ENCODE measurements at regions of chr3 and their contacts with region 1.

Region 1: GRCh38 chr3:51498876-51499738 is 708 bp downstream of the DCAF1 start:
- DNase-seq: peak; percentile 70
- ATAC-seq: peak; percentile 84
- H3K4me3 ChIP-seq: peak overlapping the region; percentile 71
- H3K27ac ChIP-seq: peak overlapping the region; percentile 80
- H3K4me1 ChIP-seq: peaks cover 5% of the 10 kb centered on the region
- H3K27me3 ChIP-seq: no peaks in the 10 kb centered on the region
- CTCF ChIP-seq: no peak
- EP300 ChIP-seq: no peak
- POLR2A ChIP-seq: 0 out of 2 replicates have a peak, but pooled peaks have one; percentile 0
- RAD21 ChIP-seq: no peak

Region 2: GRCh38 chr3:50568947-50569749 is 930.0 kb before region 1 on chr3 and contains the start of gene HEMK1:
- CTCF ChIA-PET with region 1: no interaction called
- POLR2A ChIA-PET with region 1: interaction called, 10 read pairs
- RAD21 ChIA-PET with region 1: interaction called, 4 read pairs
- SMC1A ChIA-PET with region 1: no interaction called
- in situ Hi-C with region 1: no loop called
- intact Hi-C with region 1: no loop called
- DNase-seq: peak; percentile 76
- ATAC-seq: peak; percentile 84
- H3K4me3 ChIP-seq: peak within 1 kb of the TSS; percentile 81
- H3K27ac ChIP-seq: peak within 1 kb of the TSS; percentile 91
- H3K4me1 ChIP-seq: peaks cover 13% of the 10 kb centered on the region
- H3K27me3 ChIP-seq: no peaks in the 10 kb centered on the region
- CTCF ChIP-seq: no peak
- EP300 ChIP-seq: 0 out of 4 replicates have a peak, but pooled peaks of 1 of the 2 experiments have one; percentile 15
- POLR2A ChIP-seq: peak; percentile 85
- RAD21 ChIP-seq: no peak
- polyA plus RNA-seq, gene HEMK1: 2.8 to 10.5 TPM

Region 3: GRCh38 chr3:51216291-51216690 is 282.8 kb before region 1 on chr3:
- CTCF ChIA-PET with region 1: no interaction called
- POLR2A ChIA-PET with region 1: no interaction called
- RAD21 ChIA-PET with region 1: no interaction called
- SMC1A ChIA-PET with region 1: no interaction called
- in situ Hi-C with region 1: no loop called
- intact Hi-C with region 1: no loop called
- DNase-seq: no peak
- ATAC-seq: no peak
- H3K4me3 ChIP-seq: no peak overlapping the region
- H3K27ac ChIP-seq: no peak overlapping the region
- H3K4me1 ChIP-seq: no peaks in the 10 kb centered on the region
- H3K27me3 ChIP-seq: no peaks in the 10 kb centered on the region; a peak in 1 of 4 replicates
- CTCF ChIP-seq: no peak
- EP300 ChIP-seq: no peak
- POLR2A ChIP-seq: no peak
- RAD21 ChIP-seq: no peak

Region 4: DNA sequence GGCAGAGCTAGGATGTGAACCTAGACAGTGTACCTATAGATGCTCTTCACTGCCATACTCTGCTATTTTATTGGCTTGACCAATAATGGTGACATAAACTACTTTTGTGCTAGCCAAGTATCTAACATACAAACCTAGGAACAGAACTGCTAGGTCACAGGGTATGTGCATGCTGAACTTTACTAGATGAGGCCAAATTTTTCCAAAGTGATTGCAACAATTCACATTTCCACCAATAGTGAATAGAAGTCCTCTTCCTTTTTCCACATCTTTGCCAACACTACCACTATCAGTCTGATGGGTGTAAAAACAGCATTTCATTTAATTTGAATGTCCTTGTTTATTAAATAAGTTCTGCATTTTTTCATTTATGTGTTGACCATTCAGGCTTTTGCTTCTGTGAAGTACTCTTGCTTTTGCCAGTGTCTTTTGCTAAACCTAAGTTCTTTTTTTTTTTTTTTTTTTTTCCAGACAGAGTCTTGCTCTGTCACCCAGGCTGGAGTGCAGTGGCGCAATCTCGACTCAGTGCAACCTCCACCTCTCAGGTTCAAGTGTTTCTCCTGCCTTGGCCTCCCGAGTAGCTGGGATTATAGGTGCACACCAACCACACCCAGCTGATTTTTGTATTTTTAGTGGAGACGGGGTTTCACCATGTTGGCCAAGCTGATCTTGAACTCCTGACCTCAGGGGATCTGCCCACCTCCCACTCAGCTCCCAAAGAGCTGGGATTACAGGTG is 53.4 kb before region 1 on chr3:
- CTCF ChIA-PET with region 1: no interaction called
- POLR2A ChIA-PET with region 1: interaction called, 14 read pairs
- RAD21 ChIA-PET with region 1: interaction called, 4 read pairs
- SMC1A ChIA-PET with region 1: no interaction called
- in situ Hi-C with region 1: no loop called
- intact Hi-C with region 1: no loop called
- DNase-seq: no peak
- ATAC-seq: no peak
- H3K4me3 ChIP-seq: no peak overlapping the region
- H3K27ac ChIP-seq: no peak overlapping the region
- H3K4me1 ChIP-seq: peaks cover 3% of the 10 kb centered on the region; the same call in 1 of the 2 replicates
- H3K27me3 ChIP-seq: no peaks in the 10 kb centered on the region
- CTCF ChIP-seq: no peak
- EP300 ChIP-seq: no peak
- POLR2A ChIP-seq: no peak
- RAD21 ChIP-seq: no peak

Region 5: GRCh38 chr3:51478630-51479029 is 20.5 kb before region 1 on chr3:
- CTCF ChIA-PET with region 1: no interaction called
- POLR2A ChIA-PET with region 1: no interaction called
- RAD21 ChIA-PET with region 1: no interaction called
- SMC1A ChIA-PET with region 1: no interaction called
- in situ Hi-C with region 1: no loop called
- intact Hi-C with region 1: no loop called
- DNase-seq: no peak
- ATAC-seq: no peak
- H3K4me3 ChIP-seq: no peak overlapping the region
- H3K27ac ChIP-seq: no peak overlapping the region
- H3K4me1 ChIP-seq: no peaks in the 10 kb centered on the region
- H3K27me3 ChIP-seq: no peaks in the 10 kb centered on the region
- CTCF ChIP-seq: no peak
- EP300 ChIP-seq: no peak
- POLR2A ChIP-seq: no peak
- RAD21 ChIP-seq: no peak

Region 6: GRCh38 chr3:51530490-51530889 is 31.4 kb after region 1 on chr3:
- CTCF ChIA-PET with region 1: interaction called, 13 read pairs
- POLR2A ChIA-PET with region 1: interaction called, 10 read pairs
- RAD21 ChIA-PET with region 1: interaction called, 69 read pairs
- SMC1A ChIA-PET with region 1: interaction called, 4 read pairs
- in situ Hi-C with region 1: no loop called
- intact Hi-C with region 1: loop called (anchors 2 kb)
- DNase-seq: no peak
- ATAC-seq: no peak
- H3K4me3 ChIP-seq: no peak overlapping the region
- H3K27ac ChIP-seq: no peak overlapping the region
- H3K4me1 ChIP-seq: no peaks in the 10 kb centered on the region
- H3K27me3 ChIP-seq: no peaks in the 10 kb centered on the region
- CTCF ChIP-seq: no peak
- EP300 ChIP-seq: no peak
- POLR2A ChIP-seq: no peak
- RAD21 ChIP-seq: no peak

Region 7: GRCh38 chr3:51670823-51671733 is 172.0 kb after region 1 on chr3 and contains the start of gene TEX264:
- CTCF ChIA-PET with region 1: interaction called, 331 read pairs
- POLR2A ChIA-PET with region 1: interaction called, 105 read pairs
- RAD21 ChIA-PET with region 1: interaction called, 189 read pairs
- SMC1A ChIA-PET with region 1: interaction called, 168 read pairs
- in situ Hi-C with region 1: no loop called
- intact Hi-C with region 1: loop called (anchors 1 kb)
- DNase-seq: peak; percentile 53
- ATAC-seq: peak; percentile 87
- H3K4me3 ChIP-seq: peak within 1 kb of the TSS; percentile 68
- H3K27ac ChIP-seq: peak within 1 kb of the TSS; percentile 93
- H3K4me1 ChIP-seq: peaks cover 22% of the 10 kb centered on the region
- H3K27me3 ChIP-seq: no peaks in the 10 kb centered on the region
- CTCF ChIP-seq: no peak
- EP300 ChIP-seq: no peak
- POLR2A ChIP-seq: peak; percentile 88
- RAD21 ChIP-seq: no peak
- polyA plus RNA-seq, gene TEX264: 3.6 to 15.3 TPM

Region 8: DNA sequence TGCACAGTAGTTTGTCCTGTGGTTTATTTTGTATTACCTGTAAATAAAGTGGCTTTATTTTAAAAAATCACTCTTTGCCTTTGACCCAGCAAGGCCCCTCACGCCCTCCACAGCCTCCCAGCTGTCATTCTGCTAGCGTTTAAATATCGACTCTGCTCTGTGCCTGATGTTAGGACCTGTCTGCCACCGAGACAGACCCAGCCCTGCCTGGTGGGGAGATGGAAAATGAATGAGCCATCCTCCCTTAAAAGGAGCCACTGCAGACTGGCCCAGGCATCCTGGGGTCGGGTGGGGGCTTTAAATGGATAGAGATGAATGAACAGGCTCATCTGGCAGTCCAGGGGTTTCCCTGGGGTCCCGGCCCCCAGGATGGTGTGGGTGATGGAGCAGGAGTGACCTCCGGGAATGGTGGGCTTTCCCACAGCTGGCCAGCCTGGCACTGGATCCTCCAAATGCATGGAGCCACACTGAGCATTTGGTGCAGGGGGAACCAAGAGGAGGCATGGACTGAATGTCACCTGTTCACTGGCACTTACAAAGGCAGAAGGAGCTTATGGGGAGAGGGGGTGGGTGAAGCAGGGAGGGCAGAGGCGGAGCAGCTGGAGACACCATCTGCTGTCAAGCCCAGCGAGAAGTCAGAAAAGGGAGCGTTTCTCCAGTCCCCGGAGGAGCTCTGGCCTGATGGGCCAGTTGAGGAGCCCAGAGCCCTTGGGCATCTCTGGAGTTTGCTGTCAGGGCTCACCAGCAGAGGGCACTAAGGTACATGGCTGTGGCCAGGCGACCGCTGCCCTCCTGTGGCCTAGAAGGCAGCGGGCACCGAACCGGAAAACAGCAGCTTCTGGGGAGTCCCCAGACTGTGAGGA is 219.7 kb after region 1 on chr3:
- CTCF ChIA-PET with region 1: interaction called, 16 read pairs
- POLR2A ChIA-PET with region 1: no interaction called
- RAD21 ChIA-PET with region 1: interaction called, 5 read pairs
- SMC1A ChIA-PET with region 1: interaction called, 3 read pairs
- in situ Hi-C with region 1: no loop called
- intact Hi-C with region 1: no loop called
- DNase-seq: peak; percentile 23
- ATAC-seq: peak; percentile 98
- H3K4me3 ChIP-seq: no peak overlapping the region
- H3K27ac ChIP-seq: no peak overlapping the region
- H3K4me1 ChIP-seq: no peaks in the 10 kb centered on the region
- H3K27me3 ChIP-seq: no peaks in the 10 kb centered on the region
- CTCF ChIP-seq: peak; percentile 71 to 96 (median 92)
- EP300 ChIP-seq: no peak
- POLR2A ChIP-seq: no peak
- RAD21 ChIP-seq: peak; percentile 32; the same call in 1 of the 2 replicates

Region 9: DNA sequence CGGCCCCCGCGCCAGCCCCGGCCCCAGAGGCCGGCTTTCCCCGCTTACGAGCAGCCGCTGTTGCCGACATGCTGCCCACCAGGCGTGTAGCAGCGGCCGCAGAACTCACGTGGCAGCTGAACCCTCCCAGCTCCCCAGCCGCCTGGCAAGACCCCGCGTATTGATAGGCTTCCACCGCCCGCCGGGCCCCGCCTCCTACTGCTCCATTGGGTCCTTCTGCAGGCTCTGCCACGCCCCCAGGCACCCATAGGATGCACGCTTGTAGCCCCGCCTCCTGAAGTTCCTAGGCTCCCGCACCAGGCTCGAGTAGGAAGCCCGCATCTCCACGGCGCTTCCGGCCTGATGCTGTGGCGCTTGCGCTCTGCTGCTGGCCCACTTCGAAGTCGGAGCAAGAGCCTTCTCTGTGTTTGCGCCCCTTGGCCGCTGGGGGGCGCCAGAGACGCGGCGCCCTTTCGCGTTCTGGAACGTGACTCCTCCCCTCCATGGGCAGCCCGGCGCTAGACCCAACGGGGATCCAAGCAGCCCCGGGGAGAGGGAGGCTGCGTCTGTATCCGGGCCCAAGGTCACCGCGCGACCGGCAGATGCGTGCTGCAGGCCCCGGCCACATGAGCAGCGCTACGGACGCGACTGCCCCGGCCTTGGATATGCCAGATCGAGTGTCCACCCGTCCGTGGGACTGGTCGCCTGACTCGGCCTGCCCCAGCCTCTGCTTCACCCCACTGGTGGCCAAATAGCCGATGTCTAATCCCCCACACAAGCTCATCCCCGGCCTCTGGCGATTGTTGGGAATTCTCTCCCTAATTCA is 442.9 kb after region 1 on chr3 and contains the starts of genes PARP3 and RRP9:
- CTCF ChIA-PET with region 1: no interaction called
- POLR2A ChIA-PET with region 1: interaction called, 10 read pairs
- RAD21 ChIA-PET with region 1: no interaction called
- SMC1A ChIA-PET with region 1: no interaction called
- in situ Hi-C with region 1: no loop called
- intact Hi-C with region 1: no loop called
- DNase-seq: peak; percentile 99
- ATAC-seq: peak; percentile 92
- H3K4me3 ChIP-seq: peak within 1 kb of the TSS; percentile 96
- H3K27ac ChIP-seq: peak within 1 kb of the TSS; percentile 98
- H3K4me1 ChIP-seq: peaks cover 11% of the 10 kb centered on the region
- H3K27me3 ChIP-seq: no peaks in the 10 kb centered on the region
- CTCF ChIP-seq: peak; percentile 99 to 100 (median 99); a peak in 5 of 6 replicates
- EP300 ChIP-seq: peak in 1 of 2 experiments; percentile 38; a peak in 1 of 4 replicates
- POLR2A ChIP-seq: peak; percentile 91
- RAD21 ChIP-seq: peak; percentile 83
- polyA plus RNA-seq, gene PARP3: 2.1 to 2.2 TPM
- polyA plus RNA-seq, gene RRP9: 4.7 to 10.6 TPM

Measured in GM12878 (cell line).